Activated T-helper 1 cell treated with anti-CD3 and anti-CD28 coated beads, Interleukin-12 subunit alpha, Interleukin-12 subunit beta, Interleukin-2, Interleukin-4 antibody, amounts not matched to agents 30 ng/mL and 10 ng/mL and 1 ng/mL, durations not matched to agents 14 hours and 24 hours and 36 hours (primary cell): ENCODE measurements at regions of chr14 and their contacts with region 1.

Region 1: DNA sequence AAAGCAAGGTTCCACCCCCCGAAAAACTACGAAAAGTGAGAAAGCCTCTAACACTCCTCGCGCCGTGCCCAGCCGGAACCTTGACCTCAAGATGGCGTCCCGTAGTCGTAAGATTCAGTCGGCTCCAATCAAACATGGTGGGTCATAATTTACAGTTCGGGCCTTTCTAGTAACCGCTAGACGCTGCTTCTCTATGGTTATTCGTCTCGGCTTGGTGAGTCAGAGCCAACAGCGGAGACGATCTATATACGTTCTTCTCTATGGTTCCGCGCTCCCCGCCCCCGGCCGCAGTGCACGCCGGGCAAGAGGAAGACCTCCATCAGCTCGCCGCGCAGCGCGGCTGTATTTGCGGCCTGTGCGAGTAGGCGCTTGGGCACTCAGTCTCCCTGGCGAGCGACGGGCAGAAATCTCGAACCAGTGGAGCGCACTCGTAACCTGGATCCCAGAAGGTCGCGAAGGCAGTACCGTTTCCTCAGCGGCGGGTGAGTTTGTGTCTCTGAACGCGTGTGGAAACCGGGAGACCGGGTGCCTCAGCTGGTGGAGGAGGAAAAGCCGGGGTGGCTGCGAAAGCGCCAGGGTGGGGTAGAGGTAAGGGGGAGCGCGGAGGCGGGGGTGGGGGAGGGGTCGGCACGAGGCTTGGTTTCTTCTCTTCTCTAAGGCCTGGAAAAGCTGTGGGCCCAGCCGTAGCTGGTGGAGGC is at the start of gene RBM25:
- DNase-seq: peak; percentile 94
- H3K4me3 Mint-ChIP-seq: no peak within 1 kb of the TSS
- H3K27ac Mint-ChIP-seq: no peak within 1 kb of the TSS
- H3K4me1 Mint-ChIP-seq: peaks cover 32% of the 10 kb centered on the region
- H3K27me3 Mint-ChIP-seq: no peaks in the 10 kb centered on the region
- total RNA-seq, gene RBM25: 128 and 129 TPM in 2 replicates

Region 2: GRCh38 chr14:72476657-72477499 is 581.5 kb before region 1 on chr14:
- intact Hi-C with region 1: loop called (anchors 5 kb)
- DNase-seq: peak; percentile 81
- H3K4me3 Mint-ChIP-seq: peak overlapping the region; percentile 53
- H3K27ac Mint-ChIP-seq: peak overlapping the region; percentile 87
- H3K4me1 Mint-ChIP-seq: peaks cover 80% of the 10 kb centered on the region
- H3K27me3 Mint-ChIP-seq: no peaks in the 10 kb centered on the region

Region 3: DNA sequence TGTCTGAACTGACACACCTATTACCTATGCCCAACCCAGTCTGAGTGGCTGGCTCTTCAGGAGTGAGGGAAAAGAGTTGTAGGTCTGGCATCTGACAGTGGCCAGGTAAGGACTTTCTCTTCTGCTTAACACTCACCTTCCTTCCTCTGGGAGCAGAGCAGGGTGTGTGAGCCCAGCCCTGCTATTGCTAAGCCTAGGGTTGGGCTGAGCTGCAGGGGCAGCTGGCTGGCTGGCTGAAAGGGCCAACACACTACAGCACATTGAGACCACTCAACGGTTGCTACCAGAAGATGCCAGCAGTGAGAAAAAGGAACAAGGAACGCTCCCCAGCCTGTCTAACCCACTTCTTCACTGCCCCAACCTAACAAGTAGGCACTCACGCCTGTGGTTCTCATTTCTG is 365.7 kb before region 1 on chr14:
- intact Hi-C with region 1: no loop called
- DNase-seq: no peak
- H3K4me3 Mint-ChIP-seq: no peak overlapping the region
- H3K27ac Mint-ChIP-seq: no peak overlapping the region
- H3K4me1 Mint-ChIP-seq: peaks cover 16% of the 10 kb centered on the region
- H3K27me3 Mint-ChIP-seq: peaks cover 4% of the 10 kb centered on the region

Region 4: GRCh38 chr14:72893636-72894321 is 164.6 kb before region 1 on chr14 and contains the start of gene DPF3:
- intact Hi-C with region 1: loop called (anchors 1 kb)
- DNase-seq: peak; percentile 93
- H3K4me3 Mint-ChIP-seq: peak within 1 kb of the TSS; percentile 95
- H3K27ac Mint-ChIP-seq: peak within 1 kb of the TSS; percentile 86
- H3K4me1 Mint-ChIP-seq: peaks cover 29% of the 10 kb centered on the region
- H3K27me3 Mint-ChIP-seq: peaks cover 51% of the 10 kb centered on the region
- total RNA-seq, gene DPF3: 2.8 and 4.3 TPM in 2 replicates

Region 5: DNA sequence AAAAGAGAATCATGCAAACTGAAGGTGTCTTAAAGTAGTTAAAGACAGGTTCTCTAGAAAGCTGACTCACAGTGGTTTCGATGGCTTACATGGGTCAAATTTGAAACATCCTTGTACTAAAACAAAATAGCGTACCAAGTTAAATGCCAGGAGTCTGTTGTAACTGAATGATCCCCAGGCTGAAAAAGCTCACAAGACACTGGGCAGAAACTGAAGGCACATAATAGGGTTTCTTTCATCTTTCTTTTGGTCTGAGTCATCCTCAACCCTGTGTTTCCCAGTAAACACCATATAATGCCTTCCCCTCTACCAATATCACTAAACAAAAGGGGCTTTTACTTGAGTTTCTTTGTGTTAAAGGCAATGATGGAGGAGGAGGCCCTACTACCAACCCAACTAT is 44.3 kb before region 1 on chr14:
- intact Hi-C with region 1: loop called (anchors 1 kb)
- DNase-seq: peak; percentile 1
- H3K4me3 Mint-ChIP-seq: no peak overlapping the region
- H3K27ac Mint-ChIP-seq: peak overlapping the region; percentile 71
- H3K4me1 Mint-ChIP-seq: peaks cover 18% of the 10 kb centered on the region
- H3K27me3 Mint-ChIP-seq: no peaks in the 10 kb centered on the region

Region 6: GRCh38 chr14:73136387-73137225 is 78.2 kb after region 1 on chr14 and contains the start of gene PSEN1:
- intact Hi-C with region 1: loop called (anchors 1 kb)
- DNase-seq: peak; percentile 98
- H3K4me3 Mint-ChIP-seq: peak within 1 kb of the TSS; percentile 86
- H3K27ac Mint-ChIP-seq: peak within 1 kb of the TSS; percentile 100
- H3K4me1 Mint-ChIP-seq: peaks cover 19% of the 10 kb centered on the region
- H3K27me3 Mint-ChIP-seq: no peaks in the 10 kb centered on the region
- total RNA-seq, gene PSEN1: 41.1 and 41.9 TPM in 2 replicates

Region 7: GRCh38 chr14:73458151-73458976 is 400.0 kb after region 1 on chr14 and contains the start of gene NUMB:
- intact Hi-C with region 1: loop called (anchors 1 kb)
- DNase-seq: peak; percentile 96
- H3K4me3 Mint-ChIP-seq: peak within 1 kb of the TSS; percentile 98
- H3K27ac Mint-ChIP-seq: peak within 1 kb of the TSS; percentile 98
- H3K4me1 Mint-ChIP-seq: peaks cover 58% of the 10 kb centered on the region
- H3K27me3 Mint-ChIP-seq: no peaks in the 10 kb centered on the region
- total RNA-seq, gene NUMB: 49.6 and 53.4 TPM in 2 replicates

Region 8: DNA sequence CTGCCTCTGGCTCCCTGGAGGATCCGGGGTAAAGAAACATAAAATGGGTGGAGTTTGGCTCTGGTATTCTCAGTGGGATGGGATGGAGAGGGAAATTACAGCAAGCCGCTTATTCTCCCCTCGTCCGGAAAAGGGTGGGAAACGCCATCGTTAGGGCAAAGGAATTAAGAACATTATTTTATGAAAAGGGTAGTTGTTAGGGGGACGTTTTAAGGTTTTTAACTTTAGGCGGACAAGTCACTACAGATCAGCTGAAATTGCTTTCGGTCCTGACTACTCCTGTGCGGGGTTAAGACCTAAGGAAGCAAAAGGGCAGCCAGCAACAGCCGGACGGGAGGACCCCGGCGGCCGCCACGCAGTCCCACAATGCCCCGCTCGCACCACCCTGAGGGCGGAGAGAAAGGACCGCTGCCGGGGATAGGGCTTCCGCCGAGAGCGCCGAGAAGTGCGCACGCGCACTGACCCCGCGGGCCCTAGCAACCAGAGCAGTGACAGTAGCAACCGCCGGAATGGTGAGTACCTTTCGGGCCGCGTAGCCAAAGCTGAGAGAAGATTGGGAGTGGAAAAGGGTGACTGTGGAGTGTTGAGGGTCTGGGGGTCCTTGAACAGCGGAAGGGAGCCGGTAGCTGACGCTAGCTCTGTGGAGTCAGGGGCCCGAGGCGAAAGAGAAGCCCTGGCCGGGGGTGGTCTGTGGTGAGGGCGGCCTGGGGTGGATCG is 586.3 kb after region 1 on chr14 and contains the start of gene DNAL1:
- intact Hi-C with region 1: loop called (anchors 2 kb)
- DNase-seq: peak; percentile 92
- H3K4me3 Mint-ChIP-seq: peak within 1 kb of the TSS; percentile 86
- H3K27ac Mint-ChIP-seq: peak within 1 kb of the TSS; percentile 71
- H3K4me1 Mint-ChIP-seq: peaks cover 15% of the 10 kb centered on the region
- H3K27me3 Mint-ChIP-seq: no peaks in the 10 kb centered on the region
- total RNA-seq, gene DNAL1: 5.3 and 8.5 TPM in 2 replicates

Region 9: GRCh38 chr14:73809391-73809790 is 751.0 kb after region 1 on chr14:
- intact Hi-C with region 1: no loop called
- DNase-seq: no peak
- H3K4me3 Mint-ChIP-seq: no peak overlapping the region
- H3K27ac Mint-ChIP-seq: no peak overlapping the region
- H3K4me1 Mint-ChIP-seq: peaks cover 9% of the 10 kb centered on the region
- H3K27me3 Mint-ChIP-seq: no peaks in the 10 kb centered on the region